Left cardiac atrium (tissue), 4 donors: ENCODE measurements at regions of chr2 and their contacts with region 1.

Region 1: DNA sequence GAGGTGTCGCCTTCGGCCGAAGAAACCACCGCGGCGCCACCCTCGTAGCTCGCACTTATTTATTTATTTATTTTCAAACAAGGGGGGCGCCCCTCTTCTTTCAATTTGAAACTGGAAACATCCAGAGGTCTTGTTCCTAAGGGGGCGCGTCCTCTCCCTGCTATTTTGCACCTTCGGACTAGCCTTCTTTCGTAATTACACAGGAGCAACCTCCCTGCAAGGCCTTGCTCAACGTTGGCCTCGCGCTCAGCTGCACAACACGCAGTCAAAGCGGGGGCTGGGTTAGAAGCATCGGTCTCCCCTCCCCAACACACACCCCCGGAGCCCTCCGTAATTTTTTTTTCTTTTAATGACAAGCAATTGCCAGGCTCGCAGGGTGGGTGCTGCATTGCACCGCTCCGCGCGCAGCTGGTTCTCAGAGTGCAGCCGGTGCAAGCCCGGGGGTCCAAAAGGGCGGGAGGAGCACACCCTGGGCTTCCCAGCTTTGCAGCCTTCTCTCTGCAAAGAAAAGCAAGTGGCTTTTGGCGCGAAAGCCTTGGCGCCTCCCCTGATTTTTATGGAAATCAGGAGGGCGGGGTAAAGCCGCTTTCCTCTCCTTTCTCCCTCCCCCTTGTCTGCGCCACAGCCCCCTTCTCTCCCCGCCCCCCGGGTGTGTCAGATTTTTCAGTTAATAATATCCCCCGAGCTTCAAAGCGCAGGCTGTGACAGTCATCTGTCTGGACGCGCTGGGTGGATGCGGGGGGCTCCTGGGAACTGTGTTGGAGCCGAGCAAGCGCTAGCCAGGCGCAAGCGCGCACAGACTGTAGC is at the start of gene MYCN:
- DNase-seq: no peak
- ATAC-seq: peak; percentile 29 to 38
- total RNA-seq, gene MYCN: 0.53 to 0.73 TPM

Region 2: GRCh38 chr2:15965564-15966019 is 25.5 kb after region 1 on chr2:
- intact Hi-C with region 1: no loop called
- DNase-seq: no peak
- ATAC-seq: no peak

Region 3: DNA sequence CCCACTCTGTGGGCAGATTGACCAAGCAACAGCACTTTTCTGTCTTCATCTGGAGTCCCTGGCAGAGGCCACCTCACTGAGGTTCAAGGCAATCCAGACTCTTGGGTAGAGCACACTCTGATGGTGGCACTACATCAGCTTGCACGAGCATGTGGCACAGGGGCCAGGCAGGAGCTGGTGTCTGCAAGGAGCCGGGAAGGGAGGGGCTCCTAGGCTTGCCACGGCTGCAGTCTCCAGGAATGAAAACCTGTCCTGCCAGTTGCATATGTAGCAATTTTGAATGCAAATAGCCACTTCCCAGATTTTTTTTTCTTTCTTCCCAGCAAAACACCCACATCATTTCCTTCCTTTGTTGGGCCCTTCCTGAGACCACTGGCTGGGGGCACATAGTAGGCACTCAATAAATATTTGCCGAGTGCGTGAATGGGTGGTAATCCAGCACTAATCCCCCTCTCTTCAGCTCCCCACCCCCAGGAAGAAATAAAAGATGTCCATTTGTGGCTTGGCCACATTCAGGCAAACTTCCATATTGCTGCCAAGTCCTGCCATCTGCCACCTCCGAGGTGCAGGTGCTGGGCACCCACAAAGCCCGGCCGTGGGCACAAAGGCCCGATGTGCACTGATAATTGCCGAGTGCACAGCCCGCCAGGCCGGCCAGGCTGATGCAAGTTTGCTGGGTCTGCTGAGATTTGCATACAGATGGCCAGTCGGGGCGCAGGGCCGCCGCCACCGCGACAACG is 72.7 kb after region 1 on chr2:
- intact Hi-C with region 1: no loop called
- DNase-seq: no peak
- ATAC-seq: no peak

Region 4: GRCh38 chr2:16155766-16156165 is 215.7 kb after region 1 on chr2:
- intact Hi-C with region 1: no loop called
- DNase-seq: no peak
- ATAC-seq: peak in 1 of 2 donors; percentile 14

Region 5: GRCh38 chr2:16281451-16282336 is 341.6 kb after region 1 on chr2:
- intact Hi-C with region 1: loop called (anchors 5 to 10 kb)
- DNase-seq: no peak
- ATAC-seq: peak; percentile 79 to 82

Region 6: DNA sequence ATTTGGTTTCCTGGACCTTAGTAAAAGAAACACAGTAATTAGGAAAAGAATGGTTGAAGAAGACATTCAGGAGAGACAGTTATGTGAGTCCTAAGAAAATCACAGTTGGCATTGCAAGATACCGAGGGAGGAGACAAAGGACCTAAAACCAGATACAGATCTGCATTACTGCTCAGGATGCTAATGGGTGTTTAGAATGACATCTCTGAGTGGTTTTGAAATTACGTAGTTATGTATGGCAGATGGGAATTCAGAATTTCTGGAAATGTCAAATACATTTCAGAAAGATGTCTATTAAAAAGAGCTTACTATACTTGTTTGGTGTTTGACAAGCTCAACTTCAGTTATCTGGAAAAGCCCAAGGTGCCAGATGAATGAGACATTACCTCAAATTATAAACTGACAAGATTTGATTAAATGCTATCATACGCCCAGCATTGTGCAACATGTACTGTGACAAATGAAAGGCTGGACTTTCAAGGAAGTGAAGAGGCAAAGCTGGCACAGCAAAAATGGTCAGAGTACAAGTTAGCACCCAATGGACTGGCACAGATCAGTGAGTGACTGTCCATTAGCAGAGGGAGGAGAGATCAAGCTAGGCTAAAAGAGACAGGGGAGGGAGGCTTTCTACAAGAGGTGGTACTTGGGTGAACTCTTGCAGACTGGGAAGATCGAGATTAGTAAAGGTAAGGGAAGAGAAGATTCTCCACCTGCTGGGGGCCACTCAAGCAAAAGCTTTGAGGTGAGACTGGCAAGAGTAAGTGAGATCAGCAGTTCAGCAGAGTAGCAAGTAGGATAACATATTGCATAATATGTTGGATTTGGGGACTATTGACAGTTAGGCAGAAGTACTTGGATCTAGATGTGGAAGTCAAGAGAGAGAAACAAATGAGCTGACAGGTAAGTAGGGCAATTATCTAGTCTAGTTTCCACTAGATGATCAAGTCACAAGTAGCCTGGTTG is 556.6 kb after region 1 on chr2:
- intact Hi-C with region 1: loop called in 1 of 2 experiments (anchors 10 kb)
- DNase-seq: no peak
- ATAC-seq: no peak

Region 7: GRCh38 chr2:16608661-16609643 is 668.9 kb after region 1 on chr2:
- intact Hi-C with region 1: loop called in 1 of 2 experiments (anchors 5 kb)
- DNase-seq: peak; percentile 86
- ATAC-seq: peak; percentile 88 to 90